Gastrocnemius medialis (tissue), 4 donors: ENCODE measurements at regions of chr1 and their contacts with region 1.

Region 1: DNA sequence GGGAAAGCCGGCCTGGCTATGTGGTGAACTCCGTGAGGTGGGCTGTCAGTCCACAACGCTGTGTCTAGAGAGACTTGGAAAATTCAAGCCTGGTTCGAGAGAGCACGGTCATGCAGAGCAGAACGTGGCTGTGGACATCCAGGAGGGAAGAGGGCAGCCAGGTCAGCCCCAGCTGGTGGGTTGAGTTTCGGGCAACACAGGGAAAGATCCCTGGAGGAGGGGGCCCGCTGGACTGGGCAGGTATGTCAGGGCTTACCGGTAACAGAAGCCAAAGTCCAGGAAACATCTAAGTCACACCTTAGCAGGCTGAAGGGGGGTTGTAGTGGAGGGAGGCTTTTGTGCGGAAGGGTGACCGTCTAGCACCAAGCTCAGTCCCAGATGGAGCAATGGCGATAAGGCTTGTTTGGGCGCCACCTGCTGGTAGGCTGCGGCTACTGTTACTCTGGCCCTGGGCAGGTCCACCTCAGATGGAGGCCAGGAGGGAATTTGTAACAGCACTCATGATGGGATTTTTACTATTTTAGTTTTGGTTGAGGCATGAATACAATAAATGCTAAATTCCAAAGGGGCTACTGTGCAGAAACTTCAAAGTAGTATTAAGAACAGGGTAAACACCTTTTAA is 143.3 kb upstream of the ZNF644 start:
- DNase-seq: peak; percentile 27 to 47
- ATAC-seq: peak; percentile 56 to 87
- H3K4me3 ChIP-seq: no peak overlapping the region
- H3K27ac ChIP-seq: no peak overlapping the region
- H3K4me1 ChIP-seq: no peaks in the 10 kb centered on the region
- H3K27me3 ChIP-seq: no peaks in the 10 kb centered on the region
- CTCF ChIP-seq: peak; percentile 61 to 89 (median 78)
- POLR2A ChIP-seq: no peak

Region 2: DNA sequence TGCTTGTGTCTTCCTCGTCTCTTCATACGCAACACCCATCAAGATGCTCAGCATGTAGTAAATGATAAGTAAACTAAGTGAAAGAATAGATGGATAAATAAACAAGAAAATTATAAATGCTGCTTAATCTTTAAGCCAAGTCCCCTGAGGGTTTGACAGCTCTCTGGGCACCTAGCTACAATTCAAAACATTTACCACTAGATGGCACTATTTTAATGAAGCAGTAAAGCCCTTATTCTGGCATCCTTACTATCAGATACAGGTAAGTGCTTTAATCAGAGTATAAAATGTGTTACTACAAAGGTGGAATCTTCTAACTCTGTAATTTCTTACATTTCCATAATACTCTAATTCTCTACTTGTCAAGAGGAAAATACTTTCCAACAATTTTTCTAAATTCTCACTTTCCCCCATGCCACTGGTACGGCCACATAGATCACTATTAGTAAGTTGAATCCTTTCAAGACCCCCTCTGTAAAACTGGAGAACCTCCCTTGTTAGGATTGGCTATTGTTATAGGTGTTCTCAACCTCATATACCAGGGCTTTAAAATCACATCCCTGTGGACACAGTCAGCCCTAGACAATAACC is 585.8 kb before region 1 on chr1:
- in situ Hi-C with region 1: loop called in 1 of 4 experiments (anchors 25 kb)
- intact Hi-C with region 1: loop called (anchors 10 kb)
- DNase-seq: no peak
- ATAC-seq: no peak
- H3K4me3 ChIP-seq: no peak overlapping the region
- H3K27ac ChIP-seq: no peak overlapping the region
- H3K4me1 ChIP-seq: no peaks in the 10 kb centered on the region
- H3K27me3 ChIP-seq: no peaks in the 10 kb centered on the region
- CTCF ChIP-seq: peak in 4 of 5 experiments; percentile 25 to 64 (median 42)
- POLR2A ChIP-seq: no peak

Region 3: GRCh38 chr1:91104712-91105111 is 60.4 kb before region 1 on chr1:
- in situ Hi-C with region 1: no loop called
- intact Hi-C with region 1: no loop called
- DNase-seq: no peak
- ATAC-seq: no peak
- H3K4me3 ChIP-seq: no peak overlapping the region
- H3K27ac ChIP-seq: no peak overlapping the region
- H3K4me1 ChIP-seq: no peaks in the 10 kb centered on the region
- H3K27me3 ChIP-seq: no peaks in the 10 kb centered on the region
- CTCF ChIP-seq: no peak
- POLR2A ChIP-seq: no peak

Region 4: DNA sequence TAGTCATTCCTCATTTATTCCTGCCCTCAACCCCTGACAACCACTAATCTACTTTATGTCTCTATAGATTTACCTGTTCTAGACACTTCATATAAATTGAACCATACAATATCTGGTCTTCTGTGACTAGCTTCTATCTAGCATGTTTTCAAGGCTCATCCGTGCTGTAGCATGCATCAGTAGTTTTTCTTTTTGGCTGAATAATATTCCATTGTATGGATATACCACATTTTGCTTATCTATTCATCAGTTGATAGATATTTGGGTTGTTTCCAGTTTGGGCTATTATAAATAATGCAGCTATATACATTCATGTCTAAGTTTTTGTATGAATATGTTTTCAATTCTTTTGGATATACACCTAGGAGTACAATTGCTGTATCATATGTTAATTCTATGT is 138.0 kb after region 1 on chr1:
- in situ Hi-C with region 1: no loop called
- intact Hi-C with region 1: no loop called
- DNase-seq: no peak
- ATAC-seq: no peak
- H3K4me3 ChIP-seq: no peak overlapping the region
- H3K27ac ChIP-seq: no peak overlapping the region
- H3K4me1 ChIP-seq: no peaks in the 10 kb centered on the region
- H3K27me3 ChIP-seq: no peaks in the 10 kb centered on the region
- CTCF ChIP-seq: no peak
- POLR2A ChIP-seq: no peak